ENCODE measurements at regions of chr5 and their contacts with region 1.

Region 1: DNA sequence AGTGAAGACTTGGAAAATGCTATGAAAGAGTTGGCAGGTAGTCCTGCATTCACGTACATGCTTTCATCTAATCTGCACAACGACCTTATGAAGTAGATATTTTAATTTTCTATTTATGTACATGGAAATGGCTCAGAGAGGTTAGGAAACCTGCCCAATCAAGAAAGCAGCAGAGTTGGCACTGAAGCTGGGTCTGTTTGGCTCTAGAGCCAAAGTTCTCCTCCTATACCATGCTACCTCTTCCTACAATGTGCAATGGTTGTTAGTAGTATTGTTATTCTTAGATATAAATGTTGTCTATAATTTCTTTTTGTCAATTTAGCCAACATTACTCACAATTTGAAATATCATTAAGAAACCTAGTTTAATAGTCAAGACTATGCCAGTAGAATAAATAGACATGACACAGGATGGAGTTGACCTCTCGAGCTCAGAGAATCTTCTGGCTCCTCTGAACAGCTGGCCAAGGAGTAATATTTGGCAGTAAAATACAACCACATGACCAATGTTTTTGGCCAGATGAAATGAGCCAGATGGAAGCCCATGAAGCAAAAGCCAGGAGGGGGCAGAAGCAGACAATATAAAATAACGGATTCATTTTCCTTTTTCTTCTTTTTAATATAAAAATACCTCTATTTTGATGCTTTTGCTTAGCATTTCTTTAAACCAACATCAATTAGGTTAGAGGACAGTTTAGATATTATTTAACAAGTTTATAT is 542.3 kb downstream of the PDE4D start:
- DNase-seq: peak in 1 of 2 donors; percentile 43
- ATAC-seq: peak; percentile 85 to 90 (median 86)
- H3K4me3 ChIP-seq: peak overlapping the region; percentile 74
- H3K27ac ChIP-seq: peak overlapping the region; percentile 95
- H3K4me1 ChIP-seq: peaks cover 64% of the 10 kb centered on the region
- H3K27me3 ChIP-seq: no peaks in the 10 kb centered on the region
- CTCF ChIP-seq: peak; percentile 43

Region 2: DNA sequence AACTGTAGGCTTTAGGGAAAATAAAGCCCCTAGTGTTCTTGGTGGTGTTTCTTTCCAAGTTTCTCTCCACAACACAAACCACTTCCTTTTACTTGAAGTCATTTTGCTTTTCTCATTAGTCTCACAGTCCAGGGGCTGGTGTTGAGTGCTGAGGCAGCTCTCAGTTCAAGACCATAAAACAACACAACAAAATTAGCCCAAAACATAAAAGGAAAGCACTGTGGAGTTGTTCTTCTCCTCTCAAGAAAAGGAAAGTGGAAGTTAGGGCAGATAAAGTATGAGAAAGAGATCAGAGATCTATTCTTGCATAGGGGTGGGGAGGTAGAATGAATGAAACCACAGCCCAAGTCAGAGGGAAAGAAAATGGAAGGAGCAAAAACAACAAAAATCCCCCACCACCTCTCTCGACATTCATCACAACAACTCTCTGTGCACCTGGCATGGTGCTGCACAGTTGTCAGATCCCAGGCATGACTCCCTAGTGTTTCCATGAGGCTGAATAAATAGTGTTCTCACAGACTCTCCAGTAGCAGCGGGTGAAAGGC is 198.5 kb before region 1 on chr5:
- intact Hi-C with region 1: no loop called
- DNase-seq: no peak
- ATAC-seq: peak in 2 of 4 donors; percentile 25 to 26
- H3K4me3 ChIP-seq: no peak overlapping the region
- H3K27ac ChIP-seq: peak overlapping the region; percentile 71
- H3K4me1 ChIP-seq: peaks cover 59% of the 10 kb centered on the region
- H3K27me3 ChIP-seq: no peaks in the 10 kb centered on the region
- CTCF ChIP-seq: no peak

Region 3: GRCh38 chr5:59206132-59206581 is 145.1 kb before region 1 on chr5:
- intact Hi-C with region 1: loop called in 1 of 2 experiments (anchors 5 kb)
- DNase-seq: no peak
- ATAC-seq: peak; percentile 74 to 82 (median 76)
- H3K4me3 ChIP-seq: no peak overlapping the region
- H3K27ac ChIP-seq: peak overlapping the region; percentile 68
- H3K4me1 ChIP-seq: peaks cover 47% of the 10 kb centered on the region
- H3K27me3 ChIP-seq: no peaks in the 10 kb centered on the region
- CTCF ChIP-seq: no peak

Region 4: GRCh38 chr5:59328709-59329296 is 22.4 kb before region 1 on chr5:
- intact Hi-C with region 1: no loop called
- DNase-seq: peak; percentile 31 to 69
- ATAC-seq: peak; percentile 48 to 77 (median 60)
- H3K4me3 ChIP-seq: peak overlapping the region; percentile 14
- H3K27ac ChIP-seq: peak overlapping the region; percentile 60
- H3K4me1 ChIP-seq: peaks cover 76% of the 10 kb centered on the region
- H3K27me3 ChIP-seq: no peaks in the 10 kb centered on the region
- CTCF ChIP-seq: no peak

Region 5: GRCh38 chr5:59401637-59402036 is 50.4 kb after region 1 on chr5:
- intact Hi-C with region 1: no loop called
- DNase-seq: no peak
- ATAC-seq: peak in 3 of 4 donors; percentile 16 to 38 (median 27)
- H3K4me3 ChIP-seq: no peak overlapping the region
- H3K27ac ChIP-seq: no peak overlapping the region
- H3K4me1 ChIP-seq: no peaks in the 10 kb centered on the region
- H3K27me3 ChIP-seq: no peaks in the 10 kb centered on the region
- CTCF ChIP-seq: no peak

Measured in psoas muscle (tissue), 8 donors.